Lower leg skin (tissue), 4 donors: ENCODE measurements at regions of chr6 and their contacts with region 1.

Region 1: DNA sequence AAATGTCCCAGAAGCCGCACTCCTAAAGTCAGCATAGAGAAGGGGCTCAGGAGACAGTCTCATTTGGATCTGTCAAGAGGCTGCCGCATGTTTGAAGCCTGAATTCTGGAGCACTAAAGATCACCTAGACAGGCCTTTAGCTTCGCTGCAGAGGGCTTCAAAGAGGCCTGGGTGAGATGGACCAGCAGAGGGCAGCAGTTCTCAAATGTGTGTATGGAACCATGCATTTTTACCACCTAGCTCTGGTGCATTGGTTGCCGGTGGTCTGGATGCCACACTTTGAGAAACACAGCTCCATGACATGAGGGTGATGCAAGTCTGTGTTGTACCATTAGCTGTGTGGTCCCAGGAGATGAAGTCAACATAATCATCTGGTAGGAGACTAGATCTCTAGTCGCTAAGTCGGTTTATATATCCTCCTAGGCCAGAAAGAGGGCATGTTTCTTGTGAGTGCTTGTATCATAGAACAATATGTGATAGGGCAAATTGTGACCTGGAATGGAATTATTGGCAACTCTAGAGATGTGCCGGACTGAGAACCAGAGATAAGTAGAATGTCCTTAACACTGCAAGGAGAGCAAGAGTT is 64.8 kb downstream of the KIAA0319 start:
- DNase-seq: peak; percentile 53 to 91
- H3K4me3 ChIP-seq: no peak overlapping the region
- CTCF ChIP-seq: peak in 1 of 3 donors; percentile 50
- POLR2A ChIP-seq: no peak

Region 2: GRCh38 chr6:24689964-24690363 is 108.8 kb after region 1 on chr6:
- intact Hi-C with region 1: loop called (anchors 5 kb)
- DNase-seq: no peak
- H3K4me3 ChIP-seq: no peak overlapping the region
- CTCF ChIP-seq: no peak
- POLR2A ChIP-seq: no peak

Region 3: GRCh38 chr6:24766680-24767462 is 185.7 kb after region 1 on chr6:
- intact Hi-C with region 1: loop called (anchors 10 kb)
- DNase-seq: no peak
- H3K4me3 ChIP-seq: no peak overlapping the region
- CTCF ChIP-seq: no peak
- POLR2A ChIP-seq: no peak

Region 4: GRCh38 chr6:25103603-25104002 is 522.4 kb after region 1 on chr6:
- intact Hi-C with region 1: no loop called
- DNase-seq: no peak
- H3K4me3 ChIP-seq: no peak overlapping the region
- CTCF ChIP-seq: no peak
- POLR2A ChIP-seq: no peak

Region 5: DNA sequence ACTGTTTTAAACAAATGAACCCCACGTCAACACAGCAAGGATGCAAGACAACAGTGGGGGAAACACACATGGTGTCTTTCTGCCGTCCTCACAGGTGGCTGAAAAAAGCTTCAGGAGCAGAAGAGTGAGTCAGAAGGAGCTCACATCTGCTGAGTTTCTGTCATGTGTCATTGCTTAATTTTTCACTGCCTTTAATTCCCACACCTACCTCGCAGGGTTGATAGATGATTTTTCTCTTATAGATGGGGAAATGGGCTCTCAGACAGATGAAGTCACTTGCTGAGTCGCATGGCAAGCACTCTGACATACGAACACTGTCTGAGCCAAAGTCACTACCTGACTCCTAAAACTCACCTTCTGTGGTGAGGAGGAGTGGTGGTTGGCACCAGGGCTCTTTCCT is 669.7 kb after region 1 on chr6:
- intact Hi-C with region 1: no loop called
- DNase-seq: no peak
- H3K4me3 ChIP-seq: no peak overlapping the region
- CTCF ChIP-seq: no peak
- POLR2A ChIP-seq: no peak